Activated CD4-positive, alpha-beta T cell treated with anti-CD3 and anti-CD28 coated beads, Interleukin-2, amount 10 ng/mL, durations not matched to agents 24 days and 14 days (primary cell): ENCODE measurements at regions of chr17 and their contacts with region 1.

Region 1: DNA sequence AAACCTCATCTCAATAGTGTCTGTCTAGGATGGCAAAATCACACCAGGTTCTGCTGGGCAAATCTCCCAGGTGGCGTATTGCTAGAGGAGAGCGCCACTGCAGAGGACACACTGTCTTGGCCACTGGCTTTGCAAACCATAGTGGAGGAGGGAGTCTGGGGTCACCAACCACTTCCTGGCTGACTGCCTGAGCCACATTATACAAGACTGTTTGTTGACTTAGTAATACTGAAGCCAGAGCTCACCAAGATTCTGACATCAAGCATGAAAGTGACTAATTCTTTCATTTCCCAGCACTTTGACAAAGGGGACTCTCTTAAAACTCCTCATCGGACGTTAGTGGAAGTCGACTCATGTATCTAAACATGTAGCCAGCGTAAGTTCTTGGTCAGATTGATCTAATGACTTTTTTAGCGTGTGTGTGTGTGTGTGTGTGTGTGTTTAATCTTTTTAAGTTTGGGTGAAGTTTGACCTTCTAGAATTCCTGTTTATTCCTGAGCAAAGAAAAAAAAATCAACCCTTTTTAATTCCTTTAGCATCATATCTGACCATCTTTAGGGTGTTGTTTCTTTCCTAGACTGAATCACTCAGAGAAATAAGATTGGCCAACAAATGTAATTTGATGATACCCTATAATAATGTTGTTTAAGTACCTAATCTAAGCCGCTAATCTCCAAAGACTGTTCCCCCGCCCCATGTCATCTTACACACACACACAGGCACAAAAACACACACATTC is 13.7 kb downstream of the PITPNC1 start:
- DNase-seq: peak; percentile 92
- H3K4me3 Mint-ChIP-seq: peak overlapping the region; percentile 70
- H3K27ac Mint-ChIP-seq: peak overlapping the region; percentile 90
- H3K4me1 Mint-ChIP-seq: peaks cover 46% of the 10 kb centered on the region
- H3K27me3 Mint-ChIP-seq: no peaks in the 10 kb centered on the region

Region 2: DNA sequence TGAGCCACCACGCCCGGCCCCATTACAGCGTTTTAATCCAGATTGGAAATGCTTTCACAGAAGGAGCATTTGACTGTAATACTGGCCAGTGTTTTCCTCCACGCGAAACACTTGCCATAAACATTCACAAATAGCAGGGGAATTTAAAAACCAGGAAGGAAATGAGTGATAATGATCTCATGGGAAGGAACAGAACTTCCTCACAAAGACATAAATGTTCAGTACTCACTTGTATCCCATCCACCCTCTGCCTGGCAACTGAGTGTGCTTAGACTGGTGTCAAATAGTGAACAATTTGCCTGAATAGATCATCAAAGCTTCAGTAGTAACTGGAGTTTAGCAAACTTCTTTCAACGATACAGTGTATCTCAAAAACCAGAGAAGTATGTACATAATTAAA is 78.5 kb before region 1 on chr17:
- intact Hi-C with region 1: no loop called
- DNase-seq: no peak
- H3K4me3 Mint-ChIP-seq: no peak overlapping the region
- H3K27ac Mint-ChIP-seq: no peak overlapping the region
- H3K4me1 Mint-ChIP-seq: no peaks in the 10 kb centered on the region
- H3K27me3 Mint-ChIP-seq: peaks cover 2% of the 10 kb centered on the region

Region 3: GRCh38 chr17:67406912-67407311 is 16.1 kb after region 1 on chr17:
- intact Hi-C with region 1: no loop called
- DNase-seq: no peak
- H3K4me3 Mint-ChIP-seq: no peak overlapping the region
- H3K27ac Mint-ChIP-seq: no peak overlapping the region
- H3K4me1 Mint-ChIP-seq: peaks cover 24% of the 10 kb centered on the region
- H3K27me3 Mint-ChIP-seq: no peaks in the 10 kb centered on the region

Region 4: DNA sequence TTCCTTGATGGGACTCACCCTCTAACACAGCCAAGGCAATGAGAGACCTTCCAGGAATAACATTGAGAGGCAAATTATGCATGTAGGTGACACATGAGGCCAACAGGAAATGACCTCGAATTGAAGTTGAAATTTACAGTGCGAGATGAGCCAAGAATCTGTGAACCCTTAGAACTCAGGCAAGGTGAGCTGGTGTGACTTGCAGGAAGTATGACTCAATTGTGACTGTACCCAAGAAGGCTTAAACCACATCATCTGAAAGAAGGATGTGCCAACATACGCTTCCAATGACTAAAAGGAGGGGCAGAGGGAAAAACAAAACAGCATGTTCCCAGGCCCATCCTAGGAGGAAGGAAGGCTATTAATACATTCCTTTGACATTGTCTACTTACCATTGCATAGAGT is 31.1 kb after region 1 on chr17:
- intact Hi-C with region 1: loop called (anchors 1 kb)
- DNase-seq: peak; percentile 88
- H3K4me3 Mint-ChIP-seq: peak overlapping the region; percentile 6
- H3K27ac Mint-ChIP-seq: peak overlapping the region; percentile 79
- H3K4me1 Mint-ChIP-seq: peaks cover 42% of the 10 kb centered on the region
- H3K27me3 Mint-ChIP-seq: no peaks in the 10 kb centered on the region

Region 5: DNA sequence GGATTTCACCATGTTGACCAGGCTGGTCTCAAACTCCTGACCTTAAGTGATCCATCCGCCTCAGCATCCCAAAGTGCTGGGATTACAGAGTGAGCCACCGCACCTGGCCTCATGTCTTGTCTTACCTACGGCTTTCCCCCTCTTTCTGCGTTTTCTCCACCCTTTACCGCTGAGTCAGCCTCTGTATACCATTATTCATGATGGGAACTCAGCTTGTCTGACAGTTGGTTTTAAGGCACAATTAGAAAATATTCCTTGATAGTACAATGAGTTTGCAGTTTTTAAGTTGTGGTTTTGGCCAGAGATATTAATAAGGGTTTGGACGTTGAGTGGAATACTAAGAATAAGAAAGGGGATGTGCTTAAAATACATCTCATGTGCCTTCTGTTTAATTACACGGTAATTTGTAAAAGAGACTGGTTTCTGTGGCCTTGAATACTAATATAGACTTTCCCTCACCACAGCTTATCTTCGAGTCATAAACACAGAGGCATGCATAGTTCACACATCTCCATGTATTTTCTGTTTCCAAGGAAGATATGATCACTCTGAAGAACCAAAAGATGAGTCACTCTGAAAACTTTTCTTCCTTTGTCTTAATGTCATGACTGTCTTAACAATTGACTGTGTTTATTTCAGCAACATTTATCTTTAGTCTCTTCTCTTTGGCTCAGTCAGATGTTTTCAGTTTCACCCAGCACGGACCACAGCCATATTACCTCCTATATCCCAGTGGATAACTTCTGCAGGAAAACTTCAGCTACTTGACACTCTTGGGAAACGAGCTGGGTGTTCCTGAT is 40.6 kb after region 1 on chr17:
- intact Hi-C with region 1: loop called (anchors 1 kb)
- DNase-seq: peak; percentile 66
- H3K4me3 Mint-ChIP-seq: peak overlapping the region; percentile 74
- H3K27ac Mint-ChIP-seq: peak overlapping the region; percentile 93
- H3K4me1 Mint-ChIP-seq: peaks cover 55% of the 10 kb centered on the region
- H3K27me3 Mint-ChIP-seq: no peaks in the 10 kb centered on the region

Region 6: DNA sequence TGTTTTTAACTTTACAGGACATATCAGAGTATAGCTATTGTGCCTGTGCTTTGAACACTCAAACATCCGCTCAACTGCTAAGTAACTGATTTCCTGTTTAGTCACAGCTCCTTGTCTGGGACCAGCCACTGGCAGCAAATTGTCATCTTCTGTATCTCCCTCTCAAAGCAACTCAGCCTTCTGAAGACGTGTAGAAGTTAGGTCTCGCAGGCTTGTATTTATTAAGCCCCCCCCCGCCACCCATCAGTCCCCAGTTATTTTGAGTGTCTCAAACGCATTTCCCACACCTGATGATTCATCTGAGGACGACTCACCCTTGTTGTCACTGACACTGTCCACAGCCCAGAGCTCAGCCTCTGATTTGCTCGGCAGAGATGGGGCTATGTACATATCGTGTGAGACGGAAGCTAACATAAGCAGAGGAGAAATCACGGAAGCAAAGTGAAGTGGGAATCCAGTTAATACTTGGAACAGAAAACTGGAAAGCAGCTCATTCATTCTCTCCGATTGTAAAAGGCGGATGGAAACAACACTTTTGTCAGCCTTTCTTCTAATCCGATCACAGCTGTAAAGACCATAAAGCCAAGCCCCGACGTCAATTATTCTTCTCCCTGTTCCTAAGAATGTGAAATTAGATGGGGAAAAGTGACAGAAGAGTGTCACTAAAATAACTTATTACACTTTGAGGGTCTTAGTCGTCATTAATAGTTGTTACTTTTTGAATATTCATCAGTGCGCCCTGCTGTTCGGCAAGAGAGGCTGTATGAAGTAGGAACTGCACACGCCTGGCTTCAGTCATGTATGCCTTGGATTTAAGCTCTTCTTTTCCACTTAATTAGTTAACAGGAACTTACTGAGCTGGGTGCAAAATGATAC is 50.5 kb after region 1 on chr17:
- intact Hi-C with region 1: loop called (anchors 2 kb)
- DNase-seq: peak; percentile 90
- H3K4me3 Mint-ChIP-seq: peak overlapping the region; percentile 84
- H3K27ac Mint-ChIP-seq: peak overlapping the region; percentile 96
- H3K4me1 Mint-ChIP-seq: peaks cover 51% of the 10 kb centered on the region
- H3K27me3 Mint-ChIP-seq: no peaks in the 10 kb centered on the region

Region 7: GRCh38 chr17:67452681-67453554 is 62.1 kb after region 1 on chr17:
- intact Hi-C with region 1: loop called (anchors 1 kb)
- DNase-seq: peak; percentile 83
- H3K4me3 Mint-ChIP-seq: peak overlapping the region; percentile 76
- H3K27ac Mint-ChIP-seq: peak overlapping the region; percentile 97
- H3K4me1 Mint-ChIP-seq: peaks cover 60% of the 10 kb centered on the region
- H3K27me3 Mint-ChIP-seq: no peaks in the 10 kb centered on the region